AG04450 (cell line): ENCODE measurements at regions of chr12 and their contacts with region 1.

Region 1: DNA sequence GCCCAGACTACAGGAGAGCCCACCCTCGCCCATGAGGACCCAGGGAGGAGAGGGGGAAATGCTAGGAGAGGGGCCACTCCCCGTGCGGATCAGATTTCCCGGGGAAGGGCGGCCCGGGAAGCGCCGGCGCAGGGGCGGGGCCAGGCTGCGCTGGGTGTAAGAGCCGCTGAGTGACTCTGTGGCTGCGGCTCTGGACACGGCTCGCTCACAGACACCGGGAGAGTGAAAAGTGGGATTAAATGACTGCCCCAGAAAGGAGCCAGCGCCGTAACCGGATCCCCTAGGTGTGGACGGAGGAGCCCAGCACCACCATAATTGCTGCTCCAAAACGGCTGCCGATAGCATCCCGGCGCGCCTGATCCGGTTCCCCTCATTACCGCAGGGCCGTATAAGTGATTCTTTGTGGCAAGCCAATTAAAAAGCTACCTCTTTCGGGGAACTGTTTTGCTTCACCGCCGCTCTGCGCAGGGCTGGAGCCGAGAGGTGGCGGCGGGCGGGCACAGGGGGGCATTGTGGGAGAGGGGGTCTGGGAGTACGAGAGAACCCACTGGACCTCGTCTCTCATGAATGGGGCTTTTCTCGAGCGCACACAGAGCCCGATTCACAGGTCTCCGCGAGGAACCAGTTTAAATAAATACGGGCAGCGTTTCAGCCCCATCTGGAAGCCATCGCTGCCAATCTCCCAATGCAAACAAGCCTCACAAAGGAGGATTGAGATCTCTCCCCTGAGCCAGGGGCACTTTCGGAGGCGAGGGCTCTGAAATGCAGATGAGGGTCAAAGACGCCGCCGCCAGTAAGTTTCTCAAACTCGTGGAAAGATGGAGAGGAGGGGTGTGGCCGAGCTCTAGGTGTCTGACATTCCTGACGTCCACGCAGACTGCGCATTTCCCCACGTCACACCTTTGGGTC is 2.5 kb downstream of the COL2A1 start:
- DNase-seq: no peak
- H3K4me3 ChIP-seq: peak overlapping the region; percentile 58
- H3K27ac ChIP-seq: no peak overlapping the region
- H3K27me3 ChIP-seq: peaks cover 95% of the 10 kb centered on the region
- CTCF ChIP-seq: no peak

Region 2: GRCh38 chr12:47819896-47820630 is 181.7 kb before region 1 on chr12 and contains the start of gene HDAC7:
- CTCF ChIA-PET with region 1: no interaction called
- POLR2A ChIA-PET with region 1: interaction called, 11 read pairs
- DNase-seq: no peak
- H3K4me3 ChIP-seq: peak within 1 kb of the TSS; percentile 91
- H3K27ac ChIP-seq: peak within 1 kb of the TSS; percentile 99
- H3K27me3 ChIP-seq: no peaks in the 10 kb centered on the region
- CTCF ChIP-seq: no peak
- polyA plus RNA-seq, gene HDAC7: 17.1 and 22.1 TPM in 2 replicates

Region 3: DNA sequence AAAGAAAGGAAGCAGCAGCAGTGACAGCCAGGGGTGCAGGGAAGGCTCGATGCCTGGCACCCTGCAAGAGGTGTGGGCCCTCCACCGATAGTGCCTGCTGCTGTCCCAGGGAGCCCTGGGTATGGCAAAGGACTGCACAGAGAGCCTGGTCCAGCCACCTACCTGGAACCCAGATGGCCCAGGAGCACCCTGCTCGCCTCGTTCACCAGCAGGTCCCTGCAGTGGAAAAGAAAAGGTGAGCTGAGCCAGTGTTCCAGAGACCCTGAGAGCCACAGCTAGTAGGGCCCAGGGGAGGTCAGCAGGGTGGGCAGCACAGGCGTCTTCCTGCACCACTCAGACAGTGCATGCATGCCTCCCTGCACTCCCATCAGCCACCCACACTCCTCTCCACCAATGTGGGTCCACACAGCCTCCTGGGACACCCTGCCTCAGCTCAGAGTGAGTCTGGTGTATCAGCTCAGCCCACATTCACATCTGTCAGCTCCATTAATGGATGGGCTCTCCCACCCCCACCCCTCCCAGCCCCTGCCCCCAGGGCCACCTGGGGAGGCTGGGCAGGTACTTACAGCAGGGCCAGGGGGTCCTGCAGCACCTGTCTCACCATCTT is 18.1 kb before region 1 on chr12:
- CTCF ChIA-PET with region 1: no interaction called
- POLR2A ChIA-PET with region 1: no interaction called
- DNase-seq: no peak
- H3K4me3 ChIP-seq: no peak overlapping the region
- H3K27ac ChIP-seq: no peak overlapping the region
- H3K27me3 ChIP-seq: peaks cover 14% of the 10 kb centered on the region
- CTCF ChIP-seq: no peak